Activated CD4-positive, alpha-beta memory T cell treated with anti-CD3 and anti-CD28 coated beads for 36 hours (primary cell): ENCODE measurements at regions of chr3 and their contacts with region 1.

Region 1: DNA sequence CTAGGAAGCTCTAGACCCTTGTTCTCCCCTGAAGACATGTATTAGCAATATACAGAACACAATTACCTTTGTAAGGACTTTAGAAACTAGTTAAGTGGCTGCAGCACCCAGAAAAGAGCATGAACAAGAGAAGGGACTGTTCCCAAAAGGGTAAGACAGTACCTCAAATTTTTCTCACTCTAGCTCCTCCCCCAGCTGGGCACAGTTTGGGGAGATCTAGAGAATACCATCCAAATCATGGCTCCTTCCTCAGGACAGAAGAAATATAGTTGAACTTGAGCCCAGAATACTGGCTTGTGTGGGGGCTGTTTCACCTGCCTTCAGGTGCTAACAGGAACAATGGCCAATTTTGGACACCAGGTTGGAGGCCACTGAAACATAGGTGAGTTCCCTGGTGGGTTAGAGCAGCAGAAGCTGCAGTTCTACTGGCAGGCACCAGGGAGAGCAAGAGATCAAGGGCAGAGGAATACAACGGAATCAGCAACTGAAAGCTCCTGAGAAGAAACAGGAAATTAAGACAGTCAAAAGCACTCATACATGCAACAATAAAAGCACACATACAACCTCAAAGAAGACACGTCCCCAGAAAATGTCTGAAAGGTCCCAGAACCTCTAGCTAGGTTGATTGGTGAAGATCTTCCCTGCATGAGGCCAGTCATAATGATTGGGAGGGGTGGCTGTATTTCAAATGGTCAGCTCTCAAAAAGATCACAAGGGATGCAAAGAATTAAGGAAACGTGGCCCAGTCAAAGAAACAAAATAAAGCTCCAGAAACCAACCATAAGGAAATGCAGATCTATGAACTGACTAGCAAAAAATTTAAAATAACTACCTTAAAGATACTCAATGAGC is 104.9 kb upstream of the ASB14 start:
- DNase-seq: peak; percentile 75
- H3K4me3 Mint-ChIP-seq: no peak overlapping the region
- H3K27ac Mint-ChIP-seq: no peak overlapping the region
- H3K4me1 Mint-ChIP-seq: peaks cover 6% of the 10 kb centered on the region
- H3K27me3 Mint-ChIP-seq: peaks cover 5% of the 10 kb centered on the region

Region 2: GRCh38 chr3:57281715-57282114 is 115.7 kb before region 1 on chr3:
- CTCF ChIA-PET with region 1: no interaction called
- POLR2A ChIA-PET with region 1: no interaction called
- intact Hi-C with region 1: no loop called
- DNase-seq: no peak
- H3K4me3 Mint-ChIP-seq: no peak overlapping the region
- H3K27ac Mint-ChIP-seq: no peak overlapping the region
- H3K4me1 Mint-ChIP-seq: no peaks in the 10 kb centered on the region
- H3K27me3 Mint-ChIP-seq: no peaks in the 10 kb centered on the region

Region 3: DNA sequence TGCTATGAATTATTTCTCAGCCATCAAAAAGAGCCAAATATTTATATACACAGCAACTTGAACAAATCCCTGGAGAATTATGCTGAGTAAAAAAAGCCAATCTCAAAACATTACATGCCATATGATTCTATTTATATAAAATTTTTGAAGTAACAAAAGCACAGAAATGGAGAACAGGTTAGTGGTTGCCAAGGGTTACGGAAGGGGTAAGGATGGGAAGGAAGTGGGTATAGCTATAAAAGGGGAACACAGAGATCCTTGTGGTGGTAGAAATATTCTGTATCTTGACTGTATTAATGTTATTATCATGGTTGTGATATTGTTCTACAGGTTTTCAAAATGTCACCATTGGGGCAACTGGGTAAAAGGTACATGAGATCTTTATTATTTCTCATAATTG is 42.6 kb before region 1 on chr3:
- CTCF ChIA-PET with region 1: no interaction called
- POLR2A ChIA-PET with region 1: no interaction called
- intact Hi-C with region 1: no loop called
- DNase-seq: no peak
- H3K4me3 Mint-ChIP-seq: no peak overlapping the region
- H3K27ac Mint-ChIP-seq: no peak overlapping the region
- H3K4me1 Mint-ChIP-seq: no peaks in the 10 kb centered on the region
- H3K27me3 Mint-ChIP-seq: peaks cover 2% of the 10 kb centered on the region

Region 4: GRCh38 chr3:57555738-57556458 is 158.5 kb after region 1 on chr3 and contains the start of gene PDE12:
- CTCF ChIA-PET with region 1: interaction called, 24 read pairs
- POLR2A ChIA-PET with region 1: no interaction called
- intact Hi-C with region 1: loop called (anchors 2 kb)
- DNase-seq: peak; percentile 89
- H3K4me3 Mint-ChIP-seq: peak within 1 kb of the TSS; percentile 97
- H3K27ac Mint-ChIP-seq: peak within 1 kb of the TSS; percentile 96
- H3K4me1 Mint-ChIP-seq: peaks cover 34% of the 10 kb centered on the region
- H3K27me3 Mint-ChIP-seq: no peaks in the 10 kb centered on the region
- total RNA-seq, gene PDE12: 20.7 to 21.9 TPM

Region 5: GRCh38 chr3:57659806-57660439 is 262.5 kb after region 1 on chr3:
- CTCF ChIA-PET with region 1: no interaction called
- POLR2A ChIA-PET with region 1: no interaction called
- intact Hi-C with region 1: no loop called
- DNase-seq: no peak
- H3K4me3 Mint-ChIP-seq: no peak overlapping the region
- H3K27ac Mint-ChIP-seq: no peak overlapping the region
- H3K4me1 Mint-ChIP-seq: no peaks in the 10 kb centered on the region
- H3K27me3 Mint-ChIP-seq: no peaks in the 10 kb centered on the region

Region 6: GRCh38 chr3:57692259-57693147 is 295.1 kb after region 1 on chr3 and contains the start of gene DENND6A:
- CTCF ChIA-PET with region 1: interaction called, 4 read pairs
- POLR2A ChIA-PET with region 1: no interaction called
- intact Hi-C with region 1: loop called (anchors 1 kb)
- DNase-seq: peak; percentile 97
- H3K4me3 Mint-ChIP-seq: peak within 1 kb of the TSS; percentile 81
- H3K27ac Mint-ChIP-seq: peak within 1 kb of the TSS; percentile 92
- H3K4me1 Mint-ChIP-seq: peaks cover 36% of the 10 kb centered on the region
- H3K27me3 Mint-ChIP-seq: no peaks in the 10 kb centered on the region
- total RNA-seq, gene DENND6A: 13.0 to 16.0 TPM

Region 7: DNA sequence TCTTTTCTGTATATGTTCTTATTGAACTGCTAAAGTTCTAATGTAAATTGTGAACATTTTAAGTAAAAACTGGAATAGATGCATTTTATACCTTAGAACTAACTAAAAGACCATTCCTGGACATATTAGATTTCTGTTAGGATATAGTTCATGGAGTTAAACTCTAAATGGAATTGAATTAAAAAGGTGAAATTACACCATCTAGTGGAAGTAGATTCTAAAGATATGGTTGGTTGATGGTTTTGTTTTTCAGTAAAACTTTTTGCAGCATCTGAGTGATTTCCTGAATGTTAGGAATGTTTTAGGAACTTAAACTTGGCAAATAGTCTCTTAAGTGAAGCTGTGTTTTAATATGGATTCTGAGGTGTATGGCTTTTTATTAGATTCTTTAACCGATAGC is 455.5 kb after region 1 on chr3:
- CTCF ChIA-PET with region 1: interaction called, 15 read pairs
- POLR2A ChIA-PET with region 1: no interaction called
- intact Hi-C with region 1: loop called (anchors 5 kb)
- DNase-seq: no peak
- H3K4me3 Mint-ChIP-seq: no peak overlapping the region
- H3K27ac Mint-ChIP-seq: no peak overlapping the region
- H3K4me1 Mint-ChIP-seq: no peaks in the 10 kb centered on the region
- H3K27me3 Mint-ChIP-seq: no peaks in the 10 kb centered on the region